ENCODE measurements at regions of chr17 and their contacts with region 1.

Region 1: GRCh38 chr17:33674685-33675084 is 381.6 kb upstream of the ASIC2 start:
- DNase-seq: peak; percentile 29 to 47 (median 34)
- H3K4me3 ChIP-seq: no peak overlapping the region
- H3K4me3 Mint-ChIP-seq: no peak overlapping the region
- H3K27ac ChIP-seq: no peak overlapping the region
- H3K27ac Mint-ChIP-seq: no peak overlapping the region
- H3K4me1 ChIP-seq: no peaks in the 10 kb centered on the region
- H3K4me1 Mint-ChIP-seq: peaks cover 0 to 17% (median 0%) of the 10 kb centered on the region in 4 donors
- H3K27me3 ChIP-seq: no peaks in the 10 kb centered on the region
- H3K27me3 Mint-ChIP-seq: peaks cover 2 to 4% of the 10 kb centered on the region in 2 donors

Region 2: DNA sequence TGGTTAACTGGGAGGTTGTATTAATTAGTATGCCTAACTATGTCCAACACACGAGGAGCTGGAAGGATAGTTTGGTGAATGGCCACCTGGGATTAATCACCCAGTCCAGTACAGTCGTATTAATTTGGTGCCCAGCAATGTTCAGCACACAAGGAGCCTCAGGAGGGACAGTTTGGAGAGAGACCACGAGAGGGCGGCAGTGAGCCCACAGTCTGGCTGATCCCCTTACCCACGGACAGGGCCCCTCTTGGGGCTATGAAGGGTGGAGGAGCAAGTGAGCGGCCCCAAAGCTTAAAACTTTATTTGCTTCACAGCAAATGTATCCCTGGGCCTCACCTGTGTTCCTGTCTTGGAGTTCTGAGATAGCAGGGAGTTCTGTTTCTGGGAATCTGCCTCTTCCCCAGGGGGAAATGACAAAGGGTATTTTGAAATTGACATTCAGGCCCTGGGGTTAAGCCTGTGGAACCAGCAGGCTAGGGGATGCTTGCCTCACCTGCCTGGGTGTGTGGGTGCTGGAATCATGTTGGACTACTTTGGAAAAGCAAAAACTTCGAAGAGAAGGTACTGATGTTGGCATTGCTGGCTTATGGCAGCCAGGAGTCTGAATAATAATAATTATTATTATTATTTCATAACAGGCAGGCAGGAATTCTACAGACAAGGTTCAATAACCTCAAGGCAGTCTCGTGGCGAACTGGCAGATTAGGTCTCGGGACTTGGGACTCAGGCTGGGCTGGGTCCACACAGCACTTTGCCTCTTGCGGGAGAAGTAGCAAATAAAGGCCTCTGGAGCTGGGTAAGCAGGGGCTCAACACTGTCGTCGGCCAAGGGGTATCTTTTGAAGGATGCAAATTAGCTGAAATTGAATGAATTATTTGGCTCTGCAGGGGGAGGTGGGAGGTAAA is 154.0 kb before region 1 on chr17:
- CTCF ChIA-PET with region 1: interaction called, 4 read pairs
- POLR2A ChIA-PET with region 1: no interaction called
- intact Hi-C with region 1: loop called (anchors 2 kb)
- DNase-seq: peak in 2 of 5 donors; percentile 1 to 9
- H3K4me3 ChIP-seq: no peak overlapping the region
- H3K4me3 Mint-ChIP-seq: no peak overlapping the region
- H3K27ac ChIP-seq: no peak overlapping the region
- H3K27ac Mint-ChIP-seq: no peak overlapping the region
- H3K4me1 ChIP-seq: no peaks in the 10 kb centered on the region
- H3K4me1 Mint-ChIP-seq: no peaks in the 10 kb centered on the region
- H3K27me3 ChIP-seq: no peaks in the 10 kb centered on the region
- H3K27me3 Mint-ChIP-seq: peaks cover 2 to 3% of the 10 kb centered on the region in 2 donors

Region 3: GRCh38 chr17:33686171-33686570 is 11.5 kb after region 1 on chr17:
- CTCF ChIA-PET with region 1: interaction called, 21 read pairs
- POLR2A ChIA-PET with region 1: no interaction called
- intact Hi-C with region 1: no loop called
- DNase-seq: no peak
- H3K4me3 ChIP-seq: no peak overlapping the region
- H3K4me3 Mint-ChIP-seq: no peak overlapping the region
- H3K27ac ChIP-seq: no peak overlapping the region
- H3K27ac Mint-ChIP-seq: no peak overlapping the region
- H3K4me1 ChIP-seq: no peaks in the 10 kb centered on the region
- H3K4me1 Mint-ChIP-seq: no peaks in the 10 kb centered on the region
- H3K27me3 ChIP-seq: no peaks in the 10 kb centered on the region
- H3K27me3 Mint-ChIP-seq: peaks cover 2 to 3% of the 10 kb centered on the region in 2 donors

Measured in CD4-positive, alpha-beta memory T cell (primary cell).